PC-3 (cell line): ENCODE measurements at regions of chr4 and their contacts with region 1.

Region 1: GRCh38 chr4:176789955-176790354 is 2.8 kb downstream of the VEGFC start:
- DNase-seq: peak; percentile 89
- ATAC-seq: peak; percentile 27
- H3K4me3 ChIP-seq: peak overlapping the region; percentile 98
- H3K27ac ChIP-seq: peak overlapping the region; percentile 100
- H3K4me1 ChIP-seq: peaks cover 49% of the 10 kb centered on the region
- H3K27me3 ChIP-seq: no peaks in the 10 kb centered on the region
- CTCF ChIP-seq: peak; percentile 79

Region 2: DNA sequence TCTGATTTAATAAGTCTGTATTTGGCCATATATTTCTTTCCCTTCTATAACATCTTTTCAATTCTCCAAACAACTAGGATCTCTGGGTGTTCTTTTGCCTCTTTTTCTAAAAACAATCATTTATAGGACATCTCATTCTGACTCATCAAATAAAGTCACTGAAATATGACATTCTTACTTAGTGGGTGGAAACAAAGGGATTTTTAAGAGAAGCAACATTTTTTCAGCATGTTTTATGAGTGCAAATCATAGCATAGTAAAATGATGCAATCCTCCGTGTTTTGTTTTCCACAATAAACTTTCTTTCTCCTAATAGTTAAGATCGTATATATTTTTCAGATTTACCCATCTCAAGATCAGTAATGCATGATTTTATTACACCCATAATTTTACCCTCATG is 290.4 kb before region 1 on chr4:
- CTCF ChIA-PET with region 1: no interaction called
- POLR2A ChIA-PET with region 1: no interaction called
- intact Hi-C with region 1: loop called (anchors 5 kb)
- DNase-seq: peak; percentile 92
- ATAC-seq: peak; percentile 81
- H3K4me3 ChIP-seq: peak overlapping the region; percentile 48
- H3K27ac ChIP-seq: peak overlapping the region; percentile 91
- H3K4me1 ChIP-seq: peaks cover 14% of the 10 kb centered on the region
- H3K27me3 ChIP-seq: no peaks in the 10 kb centered on the region
- CTCF ChIP-seq: no peak

Region 3: GRCh38 chr4:176841717-176842116 is 51.8 kb after region 1 on chr4:
- CTCF ChIA-PET with region 1: no interaction called
- POLR2A ChIA-PET with region 1: no interaction called
- intact Hi-C with region 1: loop called (anchors 1 kb)
- DNase-seq: peak; percentile 84
- ATAC-seq: peak; percentile 59
- H3K4me3 ChIP-seq: no peak overlapping the region
- H3K27ac ChIP-seq: peak overlapping the region; percentile 90
- H3K4me1 ChIP-seq: peaks cover 73% of the 10 kb centered on the region
- H3K27me3 ChIP-seq: no peaks in the 10 kb centered on the region
- CTCF ChIP-seq: no peak

Region 4: GRCh38 chr4:176927664-176928063 is 137.7 kb after region 1 on chr4:
- CTCF ChIA-PET with region 1: no interaction called
- POLR2A ChIA-PET with region 1: no interaction called
- intact Hi-C with region 1: loop called (anchors 1 kb)
- DNase-seq: peak; percentile 70
- ATAC-seq: peak; percentile 59
- H3K4me3 ChIP-seq: no peak overlapping the region
- H3K27ac ChIP-seq: peak overlapping the region; percentile 4
- H3K4me1 ChIP-seq: peaks cover 18% of the 10 kb centered on the region; the same call in 1 of the 2 replicates
- H3K27me3 ChIP-seq: no peaks in the 10 kb centered on the region
- CTCF ChIP-seq: no peak

Region 5: GRCh38 chr4:176939445-176939844 is 149.5 kb after region 1 on chr4:
- CTCF ChIA-PET with region 1: no interaction called
- POLR2A ChIA-PET with region 1: no interaction called
- intact Hi-C with region 1: no loop called
- DNase-seq: peak; percentile 19
- ATAC-seq: peak; percentile 24; the same call in 1 of the 2 replicates
- H3K4me3 ChIP-seq: no peak overlapping the region
- H3K27ac ChIP-seq: no peak overlapping the region
- H3K4me1 ChIP-seq: no peaks in the 10 kb centered on the region
- H3K27me3 ChIP-seq: no peaks in the 10 kb centered on the region
- CTCF ChIP-seq: no peak

Region 6: DNA sequence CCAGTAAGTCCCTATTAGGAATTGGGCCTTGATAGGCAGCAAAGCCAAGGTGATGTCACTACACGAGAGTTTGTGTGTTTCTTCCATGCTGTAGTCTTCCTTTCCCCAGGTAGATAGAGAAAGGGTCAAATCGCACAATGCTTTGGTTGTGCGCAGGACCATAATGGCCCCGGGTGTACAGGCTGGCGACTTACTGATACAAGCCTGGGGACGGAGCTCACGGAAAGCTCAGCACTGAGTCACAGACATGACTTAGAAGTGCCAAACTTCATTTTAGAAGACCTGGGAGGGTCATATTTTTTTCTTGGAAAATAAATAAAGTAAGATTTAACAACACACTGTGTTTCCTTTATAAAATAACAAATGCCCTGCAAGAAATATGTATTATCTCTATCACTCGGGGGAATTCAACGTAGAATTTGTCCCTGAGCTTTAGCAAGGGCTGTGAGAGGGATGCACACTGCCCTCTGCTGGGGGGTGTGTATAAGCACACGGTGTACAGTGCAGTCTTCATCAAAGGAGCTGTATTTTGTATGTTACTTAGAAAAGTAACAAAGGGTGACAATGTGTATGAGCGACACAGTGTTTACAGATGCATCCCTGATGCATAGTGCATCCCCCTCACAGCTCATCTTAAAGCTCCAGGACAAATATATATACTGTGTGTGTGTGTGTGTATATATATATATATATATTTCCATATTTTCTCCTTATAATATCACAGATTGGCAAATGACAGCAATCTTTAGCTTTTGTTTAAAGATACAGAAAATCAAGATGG is 257.3 kb after region 1 on chr4:
- CTCF ChIA-PET with region 1: interaction called, 8 read pairs
- POLR2A ChIA-PET with region 1: no interaction called
- intact Hi-C with region 1: loop called (anchors 1 kb)
- DNase-seq: peak; percentile 78
- ATAC-seq: peak; percentile 96
- H3K4me3 ChIP-seq: no peak overlapping the region
- H3K27ac ChIP-seq: peak overlapping the region; percentile 76
- H3K4me1 ChIP-seq: peaks cover 13% of the 10 kb centered on the region
- H3K27me3 ChIP-seq: no peaks in the 10 kb centered on the region
- CTCF ChIP-seq: peak; percentile 84